GM13976 (cell line): ENCODE measurements at regions of chr2 and their contacts with region 1.

Region 1: DNA sequence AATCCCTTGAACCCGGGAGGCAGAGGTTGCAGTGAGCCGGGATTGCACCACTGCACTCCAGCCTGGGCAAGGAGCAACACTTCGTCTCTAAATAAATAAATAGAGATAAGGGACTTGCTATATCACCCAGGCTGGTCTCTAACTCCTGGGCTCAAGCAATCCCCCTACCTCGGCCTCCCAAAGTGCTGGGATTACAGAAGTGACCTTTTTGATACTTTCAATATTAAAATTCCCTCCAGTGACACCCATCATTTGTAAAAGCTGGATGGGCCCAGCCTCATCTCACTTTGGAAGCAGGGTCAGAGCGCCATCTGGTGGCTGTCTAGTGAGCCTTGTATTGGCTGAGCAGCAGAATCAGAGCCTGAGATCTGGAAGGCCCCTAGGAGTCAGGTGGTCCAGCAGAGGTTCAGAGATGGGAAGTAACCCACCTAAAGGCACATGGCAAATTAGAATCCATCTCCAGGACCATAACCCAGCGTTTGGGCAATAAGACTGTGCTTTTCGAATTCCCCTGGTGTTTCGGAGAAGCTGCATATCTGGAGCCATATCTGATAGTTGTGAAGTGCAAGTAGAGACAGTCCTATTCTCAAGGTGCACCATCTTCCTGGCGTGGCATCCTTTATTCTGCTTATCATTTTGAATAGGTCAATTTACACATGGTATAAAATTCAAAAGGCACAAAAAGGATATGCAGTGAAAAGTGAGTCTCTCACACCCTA is 18.3 kb upstream of the SLC35F6 start:
- DNase-seq: peak; percentile 81
- CTCF ChIP-seq: peak; percentile 94

Region 2: GRCh38 chr2:26605195-26605998 is 140.4 kb before region 1 on chr2:
- in situ Hi-C with region 1: loop called (anchors 10 kb)
- DNase-seq: peak; percentile 68
- CTCF ChIP-seq: peak; percentile 75

Region 3: DNA sequence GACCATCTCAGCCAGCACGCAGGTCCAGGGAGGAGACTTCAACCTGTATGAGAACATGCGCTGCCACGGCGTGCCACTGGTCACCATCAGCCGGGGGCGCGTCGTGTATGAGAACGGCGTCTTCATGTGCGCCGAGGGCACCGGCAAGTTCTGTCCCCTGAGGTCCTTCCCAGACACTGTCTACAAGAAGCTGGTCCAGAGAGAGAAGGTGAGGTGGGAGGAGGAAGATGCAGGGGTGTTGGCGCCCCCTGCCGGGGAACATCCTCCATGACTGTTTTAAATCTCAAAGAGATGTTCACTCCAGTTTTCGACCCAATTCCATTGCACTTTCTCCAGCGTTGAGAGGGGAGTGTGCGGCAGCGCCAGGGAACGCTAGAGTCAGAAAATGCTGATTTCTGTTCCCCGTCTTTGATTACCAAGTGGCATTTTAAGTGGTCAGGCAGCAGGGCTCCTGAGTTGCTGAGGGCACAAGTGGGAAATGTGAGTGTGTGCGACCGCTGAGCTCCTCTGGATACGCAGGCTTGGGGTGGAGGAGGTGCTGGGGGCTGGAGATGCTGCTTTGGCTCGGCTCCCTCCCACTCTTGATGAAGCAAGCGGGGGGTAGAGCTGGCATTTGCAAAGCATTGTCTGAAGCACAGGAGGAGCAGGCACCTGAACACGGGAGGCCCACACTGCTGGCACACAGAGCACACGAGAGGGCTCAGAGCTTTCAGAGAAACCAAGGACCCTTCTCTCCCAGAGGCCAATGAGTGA is 197.0 kb after region 1 on chr2:
- in situ Hi-C with region 1: no loop called
- DNase-seq: peak; percentile 88
- CTCF ChIP-seq: peak; percentile 67